Left ventricle myocardium superior (tissue), 1 donor: ENCODE measurements at regions of chr1 and their contacts with region 1.

Region 1: DNA sequence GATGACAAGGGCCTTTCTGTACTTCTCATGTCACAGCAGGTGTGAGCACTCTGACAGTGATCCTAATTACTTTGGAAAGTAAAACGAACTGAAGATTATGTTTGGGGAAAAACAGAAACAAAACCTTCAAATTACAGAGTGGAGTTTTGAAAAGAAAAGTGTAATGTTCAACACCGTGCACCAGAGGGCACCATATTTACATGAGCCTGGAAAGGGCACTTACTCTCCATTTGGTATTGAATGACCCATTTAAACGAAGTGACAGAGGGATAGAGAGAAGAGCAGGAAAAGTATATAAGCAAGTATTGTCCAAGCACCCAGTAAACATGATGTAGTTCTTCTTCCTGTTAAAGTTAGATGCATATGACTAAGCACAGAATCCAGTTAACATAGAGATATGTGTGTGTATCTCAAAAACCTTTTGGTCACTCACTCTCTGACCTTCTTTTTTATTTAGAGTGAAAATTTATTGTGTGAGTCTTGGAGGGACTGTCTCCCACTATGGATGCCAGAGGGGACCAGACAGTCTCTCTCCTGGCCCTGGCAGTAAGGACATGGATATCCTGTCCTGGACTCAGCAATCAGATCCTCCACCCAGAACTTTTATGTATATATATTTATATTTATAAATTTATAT is 3.8 kb upstream of the RGSL1 start:
- DNase-seq: no peak
- ATAC-seq: peak; percentile 46

Region 2: DNA sequence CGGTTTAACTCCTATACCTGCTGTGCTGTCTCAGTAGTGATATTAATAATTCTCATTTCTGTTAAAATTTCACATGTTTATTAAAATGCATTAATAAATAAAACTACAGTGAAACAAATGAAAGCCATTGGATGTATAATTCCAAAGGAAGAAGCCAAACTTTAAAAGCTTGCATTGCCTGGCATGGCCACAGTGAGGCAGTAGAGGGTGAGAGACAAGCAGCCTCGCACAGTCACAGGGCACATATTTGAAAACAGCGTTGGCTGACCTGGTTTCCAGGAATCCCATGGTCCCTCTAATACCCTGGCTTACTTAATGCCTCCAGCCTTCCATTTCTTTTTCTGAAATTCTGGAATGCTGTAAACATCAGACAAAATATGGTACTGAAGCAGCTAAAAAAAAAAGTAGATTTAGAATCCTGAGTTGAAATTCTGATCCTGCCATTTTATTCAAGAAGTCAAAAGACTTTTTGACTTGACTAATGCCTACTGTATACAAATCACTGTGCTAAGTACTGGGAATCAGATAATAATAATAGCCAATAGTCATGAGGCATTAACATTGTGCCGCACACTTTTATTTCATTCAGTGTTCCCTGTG is 149.6 kb after region 1 on chr1:
- intact Hi-C with region 1: loop called (anchors 10 kb)
- DNase-seq: peak; percentile 66
- ATAC-seq: peak; percentile 77

Region 3: DNA sequence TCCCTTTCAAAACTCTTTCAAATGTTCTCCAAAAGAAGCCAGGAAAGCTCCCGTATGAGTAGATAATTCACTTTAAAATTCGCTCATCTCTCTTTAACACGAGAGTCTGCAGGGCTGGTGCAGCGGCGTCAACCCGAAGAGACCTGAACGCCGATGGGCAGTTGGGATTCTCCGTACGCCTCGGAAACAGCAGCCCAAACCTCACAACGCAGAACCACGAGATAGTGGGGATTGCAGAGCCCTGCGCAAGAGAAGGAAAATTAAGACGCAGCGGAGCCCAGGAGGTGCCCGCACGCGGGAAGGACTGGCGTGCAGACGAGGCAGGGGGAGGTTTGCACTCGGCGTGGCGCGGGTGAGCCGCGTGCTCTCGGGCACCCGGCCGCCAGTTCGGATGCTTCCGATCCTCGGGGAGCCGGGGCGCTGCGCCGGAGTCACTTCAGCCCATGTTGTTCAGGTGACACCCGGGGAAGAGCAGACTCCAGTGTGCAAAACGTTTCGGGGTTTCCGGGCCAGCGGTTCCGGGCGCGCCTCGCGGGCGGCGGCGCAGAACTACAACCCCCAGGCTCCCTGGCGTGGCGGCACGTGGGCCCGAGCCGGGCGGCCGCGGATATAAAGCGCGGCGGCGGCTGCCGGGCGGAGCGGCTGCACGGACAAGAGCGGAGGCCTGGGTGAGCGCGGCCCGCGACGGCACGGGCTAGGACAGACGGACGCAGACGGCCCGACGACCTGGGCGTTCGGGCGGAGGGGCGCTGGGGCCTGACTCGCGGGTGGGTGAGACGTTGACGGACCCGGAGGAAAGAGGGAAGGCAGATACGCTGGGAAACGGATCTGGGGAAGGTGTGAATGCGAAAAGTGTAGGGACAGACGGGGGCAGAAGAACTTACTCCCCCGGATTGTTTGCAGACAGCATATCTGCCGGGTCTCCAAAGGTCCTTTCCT is 343.3 kb after region 1 on chr1 and contains the start of gene NPL:
- intact Hi-C with region 1: loop called (anchors 10 kb)
- DNase-seq: peak; percentile 91
- ATAC-seq: peak; percentile 98
- total RNA-seq, gene NPL: 3.9 TPM

Region 4: GRCh38 chr1:183058851-183059502 is 612.8 kb after region 1 on chr1:
- intact Hi-C with region 1: no loop called
- DNase-seq: no peak
- ATAC-seq: no peak